ENCODE measurements at regions of chr9 and their contacts with region 1.

Region 1: DNA sequence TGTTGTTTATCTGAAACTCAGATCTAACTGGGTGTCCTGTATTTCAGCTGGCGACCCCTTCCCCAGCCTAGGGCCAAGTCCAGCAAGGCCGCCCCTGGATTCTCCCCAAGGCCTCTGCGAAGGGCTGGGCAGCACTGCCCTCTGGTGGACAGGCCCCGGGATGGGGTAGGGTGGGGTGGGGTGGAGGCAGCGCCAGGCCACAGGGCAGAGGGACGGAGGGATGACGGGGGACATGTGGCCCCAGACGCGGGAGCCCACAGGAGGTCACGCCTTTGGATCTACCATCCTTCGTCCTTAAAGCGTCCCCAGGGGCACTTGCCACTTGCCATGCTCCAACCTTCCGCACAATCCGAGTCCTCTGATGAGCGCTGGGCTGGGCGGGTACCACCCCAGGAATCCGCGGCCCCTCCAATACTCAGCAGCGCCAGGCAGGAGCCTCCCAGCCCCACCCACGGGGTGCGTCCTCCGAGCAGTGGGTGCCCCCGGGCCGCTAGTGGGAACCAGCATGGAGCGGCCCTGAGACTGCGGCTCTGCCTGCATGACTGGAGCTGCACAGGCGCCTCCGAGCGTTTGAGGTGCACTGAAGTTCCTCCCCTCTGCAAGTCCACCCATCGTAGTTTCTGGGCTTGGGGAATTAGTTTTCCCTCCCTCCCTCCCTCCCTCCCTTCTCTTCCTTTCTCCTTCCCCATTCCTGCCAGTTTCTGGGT is 7.1 kb upstream of the AGPAT2 start:
- DNase-seq: peak; percentile 72
- ATAC-seq: peak; percentile 35 to 60

Region 2: GRCh38 chr9:136644598-136645351 is 49.6 kb before region 1 on chr9:
- intact Hi-C with region 1: loop called (anchors 5 to 10 kb)
- DNase-seq: peak; percentile 86
- ATAC-seq: peak; percentile 45 to 69